ENCODE measurements at regions of chr19 and their contacts with region 1.

Region 1: DNA sequence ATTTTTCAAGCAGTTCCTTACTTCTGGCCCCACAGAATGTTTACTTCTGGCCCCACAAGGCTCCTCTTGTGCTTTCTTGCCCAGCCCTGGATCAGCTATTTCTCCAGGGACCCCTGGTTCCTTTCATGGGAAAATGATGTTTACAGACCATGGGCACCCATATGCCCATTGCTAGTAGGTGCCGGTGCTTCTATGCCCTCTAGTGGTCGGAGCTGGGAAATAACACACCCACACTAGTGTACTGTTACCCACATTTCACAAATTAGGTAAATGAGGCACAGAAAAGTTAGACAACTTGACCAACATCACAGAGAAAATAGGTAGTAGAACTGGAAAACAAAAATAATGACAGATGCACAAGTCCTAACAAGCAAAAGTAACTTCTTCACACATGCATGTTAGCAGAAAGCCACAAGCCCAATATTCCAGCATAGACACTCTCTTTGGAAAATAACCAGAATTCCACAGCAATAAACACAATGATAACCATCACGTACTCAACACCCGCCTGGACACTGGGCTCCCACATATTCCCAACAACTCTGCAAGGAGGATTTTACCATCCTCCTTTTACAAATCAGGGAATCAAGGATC is 1.3 kb upstream of the CEACAM6 start:
- DNase-seq: peak in 1 of 2 experiments; percentile 79
- H3K4me3 ChIP-seq: no peak overlapping the region
- H3K27ac ChIP-seq: no peak overlapping the region
- H3K4me1 ChIP-seq: no peaks in the 10 kb centered on the region
- H3K27me3 ChIP-seq: no peaks in the 10 kb centered on the region
- CTCF ChIP-seq: peak; percentile 45 to 68 (median 52)
- EP300 ChIP-seq: no peak
- POLR2A ChIP-seq: no peak
- RAD21 ChIP-seq: peak; percentile 14 to 40; a peak in 2 of 4 replicates

Region 2: DNA sequence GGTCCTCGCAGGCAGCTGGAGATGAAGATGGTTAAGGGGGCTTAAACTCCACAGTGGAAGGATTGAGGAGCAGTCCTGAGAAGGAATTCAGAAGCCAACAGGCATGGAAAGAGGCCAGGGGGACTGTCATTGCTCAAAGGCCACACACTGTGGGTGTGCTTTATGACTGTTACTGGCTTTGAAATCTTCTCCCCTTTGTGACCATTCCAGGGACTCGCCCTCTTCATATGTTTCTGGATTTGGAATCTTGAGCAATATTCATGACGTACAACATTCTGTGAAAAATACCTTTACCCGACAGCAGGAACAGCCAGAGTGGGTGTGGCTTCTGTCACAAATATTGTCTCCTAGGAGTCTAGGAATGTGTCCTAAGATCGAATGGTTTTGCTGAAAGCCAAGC is 82.5 kb before region 1 on chr19:
- CTCF ChIA-PET with region 1: no interaction called
- POLR2A ChIA-PET with region 1: no interaction called
- DNase-seq: no peak
- H3K4me3 ChIP-seq: no peak overlapping the region
- H3K27ac ChIP-seq: no peak overlapping the region
- H3K4me1 ChIP-seq: no peaks in the 10 kb centered on the region
- H3K27me3 ChIP-seq: no peaks in the 10 kb centered on the region
- CTCF ChIP-seq: no peak
- EP300 ChIP-seq: no peak
- POLR2A ChIP-seq: no peak
- RAD21 ChIP-seq: no peak

Region 3: GRCh38 chr19:41767115-41767514 is 13.1 kb after region 1 on chr19:
- CTCF ChIA-PET with region 1: interaction called, 11 read pairs
- POLR2A ChIA-PET with region 1: no interaction called
- DNase-seq: no peak
- H3K4me3 ChIP-seq: no peak overlapping the region
- H3K27ac ChIP-seq: no peak overlapping the region
- H3K4me1 ChIP-seq: no peaks in the 10 kb centered on the region
- H3K27me3 ChIP-seq: peaks cover 0 to 1% (median 0%) of the 10 kb centered on the region in 4 experiments; a peak in 1 of 7 replicates
- CTCF ChIP-seq: no peak
- EP300 ChIP-seq: no peak
- POLR2A ChIP-seq: no peak
- RAD21 ChIP-seq: no peak

Region 4: DNA sequence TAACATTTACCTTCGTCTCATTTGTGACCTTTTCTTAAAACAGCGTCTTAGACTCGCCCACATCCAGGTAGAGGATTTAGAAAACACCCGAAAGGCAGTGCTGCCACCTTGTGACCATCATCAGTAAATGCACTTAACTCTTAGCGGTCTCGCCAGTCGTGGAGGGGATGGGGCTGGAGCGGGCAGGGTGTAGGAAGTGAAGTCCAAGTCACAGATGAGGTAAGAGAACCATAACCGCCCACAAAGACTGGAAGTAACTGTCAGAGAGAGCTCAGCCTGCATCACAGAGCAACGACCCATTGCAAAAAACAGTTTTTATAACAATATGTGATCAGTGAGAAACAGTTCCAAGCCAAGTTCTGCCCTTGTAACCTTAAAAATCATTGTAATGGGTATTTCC is 31.6 kb after region 1 on chr19:
- CTCF ChIA-PET with region 1: interaction called, 13 read pairs
- POLR2A ChIA-PET with region 1: no interaction called
- DNase-seq: peak; percentile 41 to 74
- H3K4me3 ChIP-seq: peak overlapping the region in 1 of 4 experiments; percentile 19; a peak in 1 of 8 replicates
- H3K27ac ChIP-seq: no peak overlapping the region
- H3K4me1 ChIP-seq: no peaks in the 10 kb centered on the region
- H3K27me3 ChIP-seq: no peaks in the 10 kb centered on the region; a peak in 2 of 7 replicates
- CTCF ChIP-seq: peak; percentile 67 to 84 (median 75)
- EP300 ChIP-seq: no peak
- POLR2A ChIP-seq: no peak
- RAD21 ChIP-seq: peak; percentile 66 to 73

Region 5: GRCh38 chr19:41795031-41795461 is 41.0 kb after region 1 on chr19:
- CTCF ChIA-PET with region 1: interaction called, 10 read pairs
- POLR2A ChIA-PET with region 1: no interaction called
- DNase-seq: peak; percentile 3 to 66
- H3K4me3 ChIP-seq: no peak overlapping the region
- H3K27ac ChIP-seq: no peak overlapping the region
- H3K4me1 ChIP-seq: no peaks in the 10 kb centered on the region
- H3K27me3 ChIP-seq: no peaks in the 10 kb centered on the region; a peak in 1 of 7 replicates
- CTCF ChIP-seq: peak; percentile 43 to 67 (median 54)
- EP300 ChIP-seq: no peak
- POLR2A ChIP-seq: no peak
- RAD21 ChIP-seq: peak; percentile 22 to 30; a peak in 3 of 4 replicates

Region 6: DNA sequence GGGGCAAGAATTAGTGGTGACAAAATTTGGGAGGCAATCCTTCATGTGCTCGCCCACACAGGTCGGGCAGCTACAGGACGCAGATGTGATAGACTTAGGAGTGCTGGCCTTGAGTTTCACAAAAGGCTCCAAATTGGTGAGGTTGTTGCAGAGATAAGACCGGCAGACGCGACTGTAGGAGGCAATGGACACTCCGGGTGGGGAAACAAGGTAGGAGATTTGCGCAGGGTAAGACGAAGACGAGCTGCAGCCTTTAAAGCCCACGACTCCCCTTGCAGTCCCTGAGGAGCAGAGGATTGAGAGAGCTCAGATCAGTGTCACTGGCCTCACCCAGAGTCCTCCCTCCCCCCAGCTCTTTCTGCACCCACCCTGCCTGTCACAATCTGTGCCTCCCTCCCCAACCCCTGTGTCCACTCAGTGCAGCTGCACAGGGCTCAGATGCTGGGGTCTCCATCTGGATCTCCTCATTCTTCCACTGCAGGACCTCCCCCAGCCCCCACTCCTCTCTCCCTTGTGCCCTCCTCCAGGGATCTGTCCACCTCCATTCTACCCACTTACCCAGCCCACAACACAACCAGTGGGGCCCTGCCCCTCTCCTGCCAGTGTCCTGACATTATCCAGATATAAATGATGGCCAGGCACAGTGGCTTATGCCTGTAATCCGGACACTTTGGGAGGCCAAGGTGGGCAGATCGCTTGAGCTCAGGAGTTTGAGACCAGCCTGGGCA is 84.1 kb after region 1 on chr19:
- CTCF ChIA-PET with region 1: interaction called, 10 read pairs
- POLR2A ChIA-PET with region 1: no interaction called
- DNase-seq: no peak
- H3K4me3 ChIP-seq: no peak overlapping the region
- H3K27ac ChIP-seq: no peak overlapping the region
- H3K4me1 ChIP-seq: no peaks in the 10 kb centered on the region
- H3K27me3 ChIP-seq: no peaks in the 10 kb centered on the region
- CTCF ChIP-seq: no peak
- EP300 ChIP-seq: no peak
- POLR2A ChIP-seq: no peak
- RAD21 ChIP-seq: no peak

Region 7: DNA sequence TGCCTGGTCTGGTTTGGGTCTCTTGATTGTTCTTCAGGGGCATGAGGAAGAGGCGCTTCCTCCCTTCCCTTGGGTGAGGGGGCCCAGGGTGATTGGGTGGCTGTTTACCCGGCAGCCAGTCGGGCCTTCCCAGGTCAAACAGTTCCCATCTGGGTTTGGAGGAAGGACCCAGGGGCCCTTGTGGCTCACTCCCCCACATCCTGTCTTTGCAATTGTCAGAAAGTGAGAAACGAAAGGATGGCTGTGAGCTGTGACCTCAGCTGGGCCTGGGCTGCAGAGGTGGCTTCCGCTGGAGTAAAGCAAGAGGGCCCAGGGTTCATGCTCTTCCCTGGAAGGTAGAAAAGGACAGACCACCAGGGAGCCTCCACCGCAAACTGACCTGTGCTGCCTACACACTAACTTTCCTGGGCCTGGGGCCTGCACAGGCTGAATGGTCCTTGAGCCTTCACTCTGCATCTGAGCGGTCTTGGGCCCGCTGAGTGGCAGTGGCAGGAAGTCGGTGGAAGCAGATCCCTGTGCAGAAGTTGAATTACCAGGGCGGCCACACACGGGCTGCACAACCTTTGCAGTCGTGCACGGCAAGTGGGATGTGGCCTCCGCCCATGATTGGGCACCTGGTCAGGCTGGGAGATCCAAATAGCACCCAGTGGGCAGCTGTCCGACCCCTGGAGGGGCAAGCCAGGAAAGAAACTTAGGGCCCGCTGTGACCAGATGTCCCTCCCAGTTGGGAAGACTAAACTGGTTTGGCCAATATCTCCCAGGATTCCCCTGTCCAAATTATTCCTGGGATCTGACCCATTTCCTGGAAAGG is 117.7 kb after region 1 on chr19:
- CTCF ChIA-PET with region 1: no interaction called
- POLR2A ChIA-PET with region 1: no interaction called
- DNase-seq: no peak
- H3K4me3 ChIP-seq: no peak overlapping the region
- H3K27ac ChIP-seq: peak overlapping the region; percentile 41; the same call in 1 of the 2 replicates
- H3K4me1 ChIP-seq: peaks cover 0 to 1% (median 0%) of the 10 kb centered on the region in 4 experiments; a peak in 3 of 7 replicates
- H3K27me3 ChIP-seq: no peaks in the 10 kb centered on the region
- CTCF ChIP-seq: no peak
- EP300 ChIP-seq: no peak
- POLR2A ChIP-seq: peak in 1 of 2 experiments; percentile 88; a peak in 2 of 3 replicates
- RAD21 ChIP-seq: no peak

Measured in H1 (cell line).